ENCODE measurements at regions of chr5 and their contacts with region 1.

Region 1: GRCh38 chr5:56328753-56329560 is 95.8 kb upstream of the ANKRD55 start:
- DNase-seq: peak; percentile 76
- H3K4me3 Mint-ChIP-seq: peak overlapping the region; percentile 23
- H3K27ac Mint-ChIP-seq: peak overlapping the region; percentile 91
- H3K4me1 Mint-ChIP-seq: peaks cover 50% of the 10 kb centered on the region
- H3K27me3 Mint-ChIP-seq: no peaks in the 10 kb centered on the region

Region 2: GRCh38 chr5:55364537-55365055 is 964.4 kb before region 1 on chr5:
- CTCF ChIA-PET with region 1: no interaction called
- intact Hi-C with region 1: loop called (anchors 10 kb)
- DNase-seq: peak; percentile 28
- H3K4me3 Mint-ChIP-seq: no peak overlapping the region
- H3K27ac Mint-ChIP-seq: peak overlapping the region; percentile 25
- H3K4me1 Mint-ChIP-seq: peaks cover 19% of the 10 kb centered on the region
- H3K27me3 Mint-ChIP-seq: no peaks in the 10 kb centered on the region

Region 3: DNA sequence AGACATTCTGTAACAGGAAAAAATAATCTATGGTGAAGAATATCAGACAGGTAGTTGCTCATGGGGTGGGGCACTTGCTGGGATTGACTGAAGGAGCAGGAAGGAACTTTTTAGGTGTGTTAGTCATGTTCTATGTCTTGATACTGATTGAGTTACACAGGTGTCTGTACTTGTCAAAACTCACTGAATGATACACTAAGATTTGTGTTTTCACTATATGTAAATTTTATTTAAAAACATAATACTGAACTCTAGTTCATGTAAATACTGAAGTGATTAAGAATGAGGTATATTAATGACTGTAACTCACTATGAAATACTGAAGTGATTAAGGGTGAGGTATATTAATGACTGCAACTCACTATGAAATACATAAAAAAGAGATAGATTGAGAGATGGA is 362.7 kb before region 1 on chr5:
- CTCF ChIA-PET with region 1: no interaction called
- intact Hi-C with region 1: loop called (anchors 1 kb)
- DNase-seq: peak; percentile 35
- H3K4me3 Mint-ChIP-seq: no peak overlapping the region
- H3K27ac Mint-ChIP-seq: peak overlapping the region; percentile 78
- H3K4me1 Mint-ChIP-seq: peaks cover 54% of the 10 kb centered on the region
- H3K27me3 Mint-ChIP-seq: no peaks in the 10 kb centered on the region

Region 4: GRCh38 chr5:56095579-56096102 is 233.3 kb before region 1 on chr5:
- CTCF ChIA-PET with region 1: no interaction called
- intact Hi-C with region 1: loop called (anchors 5 kb)
- DNase-seq: no peak
- H3K4me3 Mint-ChIP-seq: peak overlapping the region; percentile 55
- H3K27ac Mint-ChIP-seq: peak overlapping the region; percentile 97
- H3K4me1 Mint-ChIP-seq: peaks cover 92% of the 10 kb centered on the region
- H3K27me3 Mint-ChIP-seq: no peaks in the 10 kb centered on the region

Region 5: DNA sequence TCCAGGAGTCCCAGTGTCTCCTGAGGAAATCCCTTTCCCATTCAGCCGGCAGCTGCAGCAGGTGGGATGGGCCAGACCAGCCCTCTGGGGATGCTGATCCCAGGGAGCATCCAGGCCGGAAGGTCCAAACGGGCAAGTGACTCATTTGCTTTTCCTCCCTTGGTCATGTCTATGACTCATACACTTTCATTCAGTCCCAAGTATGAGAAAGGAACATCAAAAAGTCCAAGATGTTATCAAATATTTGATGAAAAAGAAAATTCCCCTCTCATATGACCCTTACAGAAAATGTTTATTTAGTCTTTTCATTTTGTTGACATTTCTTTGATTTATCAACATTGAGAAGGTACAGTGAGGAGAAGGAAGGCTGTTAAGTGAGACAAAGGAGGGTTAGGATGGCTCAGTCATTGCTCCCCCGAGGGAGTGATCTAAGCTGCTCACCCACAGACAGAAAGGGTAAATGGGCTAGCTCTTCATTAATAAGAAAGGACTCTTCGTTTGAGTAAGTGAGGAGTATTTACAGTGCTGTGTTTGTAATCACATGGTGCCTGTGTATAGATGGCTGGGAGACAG is 21.7 kb after region 1 on chr5:
- CTCF ChIA-PET with region 1: no interaction called
- intact Hi-C with region 1: no loop called
- DNase-seq: no peak
- H3K4me3 Mint-ChIP-seq: no peak overlapping the region
- H3K27ac Mint-ChIP-seq: no peak overlapping the region
- H3K4me1 Mint-ChIP-seq: peaks cover 38% of the 10 kb centered on the region
- H3K27me3 Mint-ChIP-seq: no peaks in the 10 kb centered on the region

Region 6: GRCh38 chr5:56481428-56482357 is 152.7 kb after region 1 on chr5:
- CTCF ChIA-PET with region 1: no interaction called
- intact Hi-C with region 1: loop called (anchors 1 kb)
- DNase-seq: peak; percentile 14
- H3K4me3 Mint-ChIP-seq: peak overlapping the region; percentile 73
- H3K27ac Mint-ChIP-seq: no peak overlapping the region
- H3K4me1 Mint-ChIP-seq: peaks cover 30% of the 10 kb centered on the region
- H3K27me3 Mint-ChIP-seq: no peaks in the 10 kb centered on the region

Region 7: GRCh38 chr5:56814963-56815658 is 486.2 kb after region 1 on chr5 and contains the start of gene MAP3K1:
- CTCF ChIA-PET with region 1: no interaction called
- intact Hi-C with region 1: loop called (anchors 1 kb)
- DNase-seq: peak; percentile 74
- H3K4me3 Mint-ChIP-seq: peak within 1 kb of the TSS; percentile 88
- H3K27ac Mint-ChIP-seq: peak within 1 kb of the TSS; percentile 87
- H3K4me1 Mint-ChIP-seq: peaks cover 34% of the 10 kb centered on the region
- H3K27me3 Mint-ChIP-seq: no peaks in the 10 kb centered on the region
- total RNA-seq, gene MAP3K1: 18.2 to 19.2 TPM

Region 8: DNA sequence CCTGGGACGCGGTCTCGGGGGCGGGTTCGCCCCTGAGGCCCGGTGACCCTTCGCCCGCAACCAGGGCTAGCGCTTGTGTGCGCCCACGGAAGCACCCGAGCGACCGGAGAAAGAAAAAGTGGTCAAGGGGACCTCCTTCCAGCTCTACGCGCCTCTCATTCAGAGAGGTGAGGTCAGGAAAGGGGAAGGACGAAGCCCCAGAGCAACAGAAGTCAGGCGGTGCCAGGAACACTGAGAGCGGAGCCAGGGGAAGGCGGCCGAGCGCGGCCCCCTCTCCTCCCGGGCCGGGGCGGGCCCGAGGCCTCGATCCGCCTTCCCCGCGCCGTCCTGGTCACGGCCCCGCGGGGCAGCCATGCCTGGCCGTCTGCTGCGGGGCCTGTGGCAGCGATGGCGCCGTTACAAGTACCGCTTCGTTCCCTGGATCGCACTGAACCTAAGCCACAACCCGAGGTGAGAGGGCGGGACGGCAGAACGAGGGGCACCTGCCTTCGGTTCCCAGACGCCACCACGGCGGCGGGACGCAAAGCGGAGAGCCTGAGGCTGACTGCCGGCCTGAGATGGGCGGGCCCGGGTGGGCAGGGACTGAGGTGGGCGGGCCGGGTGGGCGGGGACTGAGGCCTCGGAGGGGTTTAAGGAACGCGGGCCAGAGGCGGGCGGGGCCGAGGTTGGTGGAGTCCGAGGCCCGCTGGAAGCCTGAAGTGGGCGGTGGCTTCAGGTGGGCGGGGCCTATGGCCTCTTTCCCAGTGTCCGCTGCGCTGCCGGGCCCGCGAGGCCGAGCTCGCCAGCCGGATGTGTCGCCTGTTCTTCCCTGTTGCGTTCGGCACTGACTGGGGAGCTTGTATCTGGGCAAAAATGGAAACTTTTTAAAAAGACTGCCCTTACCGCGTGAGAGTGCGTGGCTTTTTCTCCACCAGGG is 580.6 kb after region 1 on chr5 and contains the start of gene SETD9:
- CTCF ChIA-PET with region 1: no interaction called
- intact Hi-C with region 1: loop called (anchors 1 kb)
- DNase-seq: peak; percentile 97
- H3K4me3 Mint-ChIP-seq: peak within 1 kb of the TSS; percentile 81
- H3K27ac Mint-ChIP-seq: peak within 1 kb of the TSS; percentile 94
- H3K4me1 Mint-ChIP-seq: peaks cover 19% of the 10 kb centered on the region
- H3K27me3 Mint-ChIP-seq: no peaks in the 10 kb centered on the region
- total RNA-seq, gene SETD9: 5.8 to 8.6 TPM